Activated CD4-positive, alpha-beta T cell treated with anti-CD3 and anti-CD28 coated beads for 36 hours (primary cell): ENCODE measurements at regions of chr1 and their contacts with region 1.

Region 1: DNA sequence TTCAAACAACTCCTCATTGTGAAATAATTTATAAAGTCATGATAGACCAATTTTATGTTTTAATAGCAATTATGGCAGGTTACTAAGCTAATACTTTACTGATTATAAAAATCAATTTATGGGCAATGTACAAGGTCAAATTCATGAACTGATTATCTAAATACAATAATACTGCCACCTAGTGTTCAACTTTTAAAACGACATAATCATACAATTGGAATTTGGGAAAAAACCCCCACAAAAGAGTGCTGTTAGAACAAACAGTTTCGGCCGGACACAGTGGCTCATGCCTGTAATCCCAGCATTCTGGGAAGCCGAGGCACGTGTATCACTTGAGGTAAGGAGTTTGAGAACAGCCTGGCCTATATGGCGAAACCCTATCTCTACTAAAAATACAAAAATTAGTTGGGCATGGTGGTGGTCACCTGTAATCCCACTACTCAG is 14.0 kb downstream of the GTF2B start:
- DNase-seq: no peak
- ATAC-seq: no peak
- H3K4me3 Mint-ChIP-seq: no peak overlapping the region
- H3K27ac Mint-ChIP-seq: no peak overlapping the region
- H3K4me1 Mint-ChIP-seq: peaks cover 50% of the 10 kb centered on the region
- H3K27me3 Mint-ChIP-seq: no peaks in the 10 kb centered on the region

Region 2: DNA sequence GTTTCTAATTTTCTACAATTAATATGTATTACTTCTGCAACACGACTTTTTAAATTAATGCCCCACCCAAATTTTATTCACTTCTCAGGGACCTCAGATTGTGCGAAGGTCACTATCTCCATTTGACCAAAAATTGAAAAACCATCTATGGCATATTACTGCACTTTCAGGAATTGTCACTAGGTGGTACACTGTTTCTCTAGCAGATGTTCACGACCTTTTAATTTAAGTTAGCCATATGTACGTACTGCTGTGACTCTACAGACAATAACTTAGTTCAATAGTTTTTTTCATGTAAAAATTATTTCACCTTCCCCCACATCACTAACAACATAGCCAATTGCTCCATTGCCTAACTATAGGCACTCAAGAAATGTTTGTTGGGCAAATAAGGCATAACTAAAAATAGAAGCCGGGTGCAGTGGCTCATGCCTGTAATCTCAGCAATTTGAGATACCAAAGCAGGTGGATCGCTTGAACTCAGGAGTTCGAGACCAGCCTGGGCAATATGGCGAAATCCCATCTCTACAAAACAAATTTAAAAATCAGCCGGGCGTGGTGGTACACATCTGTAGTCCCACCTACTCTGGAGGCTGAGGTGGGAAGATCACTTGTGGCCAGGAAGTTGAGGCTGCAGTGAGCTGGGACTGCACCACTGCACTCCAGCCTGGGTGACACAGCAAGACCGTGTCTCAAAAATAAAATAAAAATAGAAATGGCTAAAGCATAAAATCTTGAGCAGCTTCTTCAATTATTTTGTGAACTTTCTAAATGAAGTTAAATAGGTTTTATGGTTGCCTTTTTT is 269.1 kb before region 1 on chr1:
- CTCF ChIA-PET with region 1: interaction called, 3 read pairs
- POLR2A ChIA-PET with region 1: no interaction called
- intact Hi-C with region 1: loop called (anchors 2 to 5 kb)
- DNase-seq: no peak
- ATAC-seq: peak; percentile 64
- H3K4me3 Mint-ChIP-seq: no peak overlapping the region
- H3K27ac Mint-ChIP-seq: no peak overlapping the region
- H3K4me1 Mint-ChIP-seq: peaks cover 3% of the 10 kb centered on the region
- H3K27me3 Mint-ChIP-seq: peaks cover 5% of the 10 kb centered on the region

Region 3: GRCh38 chr1:88655685-88656299 is 221.6 kb before region 1 on chr1:
- CTCF ChIA-PET with region 1: interaction called, 37 read pairs
- POLR2A ChIA-PET with region 1: interaction called, 3 read pairs
- intact Hi-C with region 1: loop called (anchors 1 kb)
- DNase-seq: no peak
- ATAC-seq: no peak
- H3K4me3 Mint-ChIP-seq: no peak overlapping the region
- H3K27ac Mint-ChIP-seq: no peak overlapping the region
- H3K4me1 Mint-ChIP-seq: peaks cover 12% of the 10 kb centered on the region
- H3K27me3 Mint-ChIP-seq: no peaks in the 10 kb centered on the region

Region 4: DNA sequence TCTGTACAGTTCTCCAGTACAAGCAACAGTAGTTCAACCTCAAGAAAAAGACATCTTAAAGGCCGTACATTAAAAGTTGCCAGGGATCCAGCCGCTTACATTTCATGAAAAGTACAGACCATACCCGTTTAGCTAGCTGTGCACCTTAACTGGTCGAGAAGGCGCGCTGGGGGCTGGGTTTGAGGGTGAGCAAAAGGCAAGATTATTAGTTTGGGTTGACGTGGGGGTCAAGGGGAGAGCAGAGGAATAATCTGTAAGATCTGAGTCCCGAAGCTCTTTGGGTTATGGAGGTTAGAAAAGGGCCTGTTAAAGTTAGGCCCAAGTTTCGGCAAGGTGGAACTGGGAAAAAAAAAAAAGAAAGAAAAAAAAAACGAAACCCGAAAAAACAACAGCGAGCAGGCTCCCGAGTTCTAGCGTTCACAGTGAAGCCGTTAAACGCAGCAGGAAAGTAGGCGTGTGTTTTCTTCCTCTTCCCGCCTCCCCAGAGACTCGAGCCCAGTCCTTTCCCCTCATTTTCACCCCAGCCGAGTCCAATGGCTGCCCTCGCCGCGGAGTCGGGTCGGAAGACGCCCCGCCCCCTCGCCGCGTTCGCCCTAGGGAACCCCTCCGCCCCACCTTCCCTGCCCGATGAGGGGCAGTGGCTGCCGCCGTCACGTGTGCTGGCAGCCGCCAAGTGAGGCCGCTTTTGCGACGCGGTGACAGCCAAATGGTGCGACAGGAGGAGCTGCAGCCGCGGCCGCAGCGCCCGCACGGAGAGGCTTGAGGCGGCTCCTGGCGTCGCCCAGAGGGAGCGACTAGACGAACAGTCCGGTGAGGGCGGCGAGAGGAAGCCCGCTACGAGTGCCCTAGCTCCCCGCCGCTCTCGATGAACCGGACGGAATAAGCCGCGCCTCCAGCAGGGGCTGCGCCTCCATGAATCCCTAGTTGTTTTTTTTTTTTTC is 193.6 kb before region 1 on chr1 and contains the start of gene PKN2:
- CTCF ChIA-PET with region 1: interaction called, 4 read pairs
- POLR2A ChIA-PET with region 1: no interaction called
- intact Hi-C with region 1: loop called in 1 of 2 experiments (anchors 5 kb)
- DNase-seq: peak; percentile 99
- ATAC-seq: peak; percentile 96
- H3K4me3 Mint-ChIP-seq: peak within 1 kb of the TSS; percentile 94
- H3K27ac Mint-ChIP-seq: peak within 1 kb of the TSS; percentile 99
- H3K4me1 Mint-ChIP-seq: peaks cover 21% of the 10 kb centered on the region
- H3K27me3 Mint-ChIP-seq: no peaks in the 10 kb centered on the region
- total RNA-seq, gene PKN2: 16.4 to 24.9 TPM

Region 5: GRCh38 chr1:88736639-88737248 is 140.7 kb before region 1 on chr1:
- CTCF ChIA-PET with region 1: interaction called, 15 read pairs
- POLR2A ChIA-PET with region 1: no interaction called
- intact Hi-C with region 1: loop called (anchors 2 to 5 kb)
- DNase-seq: peak; percentile 56
- ATAC-seq: peak; percentile 73
- H3K4me3 Mint-ChIP-seq: no peak overlapping the region
- H3K27ac Mint-ChIP-seq: no peak overlapping the region
- H3K4me1 Mint-ChIP-seq: peaks cover 12% of the 10 kb centered on the region
- H3K27me3 Mint-ChIP-seq: no peaks in the 10 kb centered on the region

Region 6: DNA sequence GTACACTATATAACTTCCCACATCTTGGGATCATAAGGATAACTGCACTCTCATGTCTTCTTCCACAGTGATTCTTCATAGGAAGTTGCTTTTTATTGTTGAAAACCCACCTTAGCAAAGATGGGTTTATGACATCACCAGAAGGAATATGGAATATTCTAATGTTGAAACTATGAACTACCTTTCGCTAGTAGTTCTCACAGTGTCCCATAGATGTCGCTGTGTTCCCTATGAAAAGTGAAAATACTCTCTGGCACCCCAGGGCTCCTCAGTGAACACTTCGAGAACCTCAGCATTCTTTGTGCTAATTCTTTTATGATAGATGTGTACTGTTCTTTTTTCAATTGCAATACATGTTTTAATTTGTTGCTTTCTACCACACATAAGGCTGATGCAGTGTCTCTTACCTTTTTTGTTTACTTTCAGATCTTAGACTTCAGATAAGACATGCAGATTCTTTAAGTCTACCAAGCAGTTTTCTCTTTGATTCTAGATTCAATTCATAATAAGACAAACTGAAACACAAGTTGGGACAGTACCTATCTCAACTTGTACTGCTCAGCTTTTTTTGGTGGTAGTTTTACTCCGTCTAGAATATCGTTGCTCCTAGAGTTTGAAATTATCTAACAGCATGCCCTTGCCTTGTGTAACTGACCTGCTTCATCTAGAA is 76.9 kb before region 1 on chr1:
- CTCF ChIA-PET with region 1: interaction called, 13 read pairs
- POLR2A ChIA-PET with region 1: no interaction called
- intact Hi-C with region 1: loop called (anchors 1 kb)
- DNase-seq: peak; percentile 59
- ATAC-seq: peak; percentile 76
- H3K4me3 Mint-ChIP-seq: no peak overlapping the region
- H3K27ac Mint-ChIP-seq: peak overlapping the region; percentile 39
- H3K4me1 Mint-ChIP-seq: peaks cover 4% of the 10 kb centered on the region
- H3K27me3 Mint-ChIP-seq: no peaks in the 10 kb centered on the region

Region 7: DNA sequence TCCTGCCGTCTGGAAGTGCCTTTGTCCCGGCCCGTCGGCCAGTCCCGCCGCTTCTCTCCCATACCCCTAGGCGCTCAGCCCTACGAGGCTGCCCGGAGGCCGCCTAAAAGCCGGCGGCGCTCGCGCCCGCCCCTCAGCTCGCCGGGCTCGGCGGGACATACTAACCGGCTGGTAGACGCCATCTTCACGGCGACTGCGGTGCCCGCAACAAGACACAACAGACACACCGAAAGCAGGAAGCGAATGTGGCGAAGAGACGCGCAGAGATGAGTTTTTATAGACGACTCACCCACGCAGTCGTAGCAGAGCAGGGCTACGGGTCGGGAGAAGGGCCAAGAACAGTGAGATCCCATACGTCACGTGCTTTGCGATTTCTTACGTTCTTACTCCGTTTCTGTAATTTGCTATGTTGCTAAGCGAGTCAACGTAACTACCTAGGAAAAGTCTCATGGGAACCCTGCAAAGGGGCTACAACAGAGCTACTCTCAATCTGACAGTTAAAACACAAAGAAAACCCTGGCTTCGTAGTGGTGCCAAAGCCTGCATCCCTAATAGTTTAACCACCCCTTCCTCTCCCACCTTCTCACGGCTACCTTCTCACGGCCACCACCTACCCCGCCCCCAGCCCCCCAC is 14.0 kb after region 1 on chr1 and contains the start of gene GTF2B:
- CTCF ChIA-PET with region 1: interaction called, 88 read pairs
- POLR2A ChIA-PET with region 1: no interaction called
- intact Hi-C with region 1: no loop called
- DNase-seq: peak; percentile 96
- ATAC-seq: peak; percentile 87
- H3K4me3 Mint-ChIP-seq: peak within 1 kb of the TSS; percentile 88
- H3K27ac Mint-ChIP-seq: peak within 1 kb of the TSS; percentile 96
- H3K4me1 Mint-ChIP-seq: peaks cover 34% of the 10 kb centered on the region
- H3K27me3 Mint-ChIP-seq: no peaks in the 10 kb centered on the region
- total RNA-seq, gene GTF2B: 34.3 to 38.1 TPM

Region 8: DNA sequence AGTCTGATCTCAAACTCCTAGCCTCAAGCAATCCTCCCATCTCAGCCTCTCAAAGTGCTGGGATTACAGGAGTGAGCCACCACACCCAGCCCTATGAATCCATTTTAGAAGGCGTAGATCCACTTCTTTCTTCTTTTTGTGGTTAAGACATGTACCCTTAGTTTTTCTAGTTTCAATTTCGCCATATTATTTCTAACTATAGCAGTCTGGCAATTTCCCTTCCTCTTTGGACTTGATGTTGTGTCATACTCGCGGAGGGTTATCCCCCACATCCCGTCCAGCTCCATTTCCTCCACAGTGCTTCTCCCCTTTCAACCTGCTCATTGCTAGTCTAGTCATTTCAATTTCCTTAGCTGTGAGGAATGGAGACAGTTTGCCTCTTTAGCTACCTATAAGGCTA is 938.2 kb after region 1 on chr1:
- CTCF ChIA-PET with region 1: no interaction called
- POLR2A ChIA-PET with region 1: no interaction called
- intact Hi-C with region 1: no loop called
- DNase-seq: no peak
- ATAC-seq: no peak
- H3K4me3 Mint-ChIP-seq: no peak overlapping the region
- H3K27ac Mint-ChIP-seq: no peak overlapping the region
- H3K4me1 Mint-ChIP-seq: peaks cover 22% of the 10 kb centered on the region
- H3K27me3 Mint-ChIP-seq: peaks cover 14% of the 10 kb centered on the region